ENCODE measurements at regions of chr6 and their contacts with region 1.

Region 1: GRCh38 chr6:87078983-87079616 is 15.8 kb downstream of the CGA start:
- DNase-seq: no peak
- ATAC-seq: peak; percentile 96
- H3K4me3 ChIP-seq: no peak overlapping the region
- H3K27ac ChIP-seq: no peak overlapping the region
- H3K4me1 ChIP-seq: peaks cover 7% of the 10 kb centered on the region
- H3K27me3 ChIP-seq: no peaks in the 10 kb centered on the region
- CTCF ChIP-seq: peak; percentile 74 to 99 (median 95)
- EP300 ChIP-seq: no peak
- POLR2A ChIP-seq: no peak
- RAD21 ChIP-seq: peak; percentile 62

Region 2: GRCh38 chr6:85516168-85516567 is 1562.9 kb before region 1 on chr6:
- CTCF ChIA-PET with region 1: no interaction called
- POLR2A ChIA-PET with region 1: no interaction called
- RAD21 ChIA-PET with region 1: no interaction called
- SMC1A ChIA-PET with region 1: no interaction called
- in situ Hi-C with region 1: no loop called
- intact Hi-C with region 1: no loop called
- DNase-seq: no peak
- ATAC-seq: no peak
- H3K4me3 ChIP-seq: no peak overlapping the region
- H3K27ac ChIP-seq: no peak overlapping the region
- H3K4me1 ChIP-seq: no peaks in the 10 kb centered on the region
- H3K27me3 ChIP-seq: no peaks in the 10 kb centered on the region
- CTCF ChIP-seq: no peak
- EP300 ChIP-seq: no peak
- POLR2A ChIP-seq: no peak
- RAD21 ChIP-seq: no peak

Region 3: GRCh38 chr6:86285876-86286275 is 793.2 kb before region 1 on chr6:
- CTCF ChIA-PET with region 1: no interaction called
- POLR2A ChIA-PET with region 1: no interaction called
- RAD21 ChIA-PET with region 1: no interaction called
- SMC1A ChIA-PET with region 1: no interaction called
- in situ Hi-C with region 1: no loop called
- intact Hi-C with region 1: no loop called
- DNase-seq: no peak
- ATAC-seq: no peak
- H3K4me3 ChIP-seq: no peak overlapping the region
- H3K27ac ChIP-seq: no peak overlapping the region
- H3K4me1 ChIP-seq: no peaks in the 10 kb centered on the region
- H3K27me3 ChIP-seq: no peaks in the 10 kb centered on the region
- CTCF ChIP-seq: no peak
- EP300 ChIP-seq: no peak
- POLR2A ChIP-seq: no peak
- RAD21 ChIP-seq: no peak

Region 4: GRCh38 chr6:86526238-86526637 is 552.9 kb before region 1 on chr6:
- CTCF ChIA-PET with region 1: no interaction called
- POLR2A ChIA-PET with region 1: no interaction called
- RAD21 ChIA-PET with region 1: no interaction called
- SMC1A ChIA-PET with region 1: no interaction called
- in situ Hi-C with region 1: no loop called
- intact Hi-C with region 1: no loop called
- DNase-seq: no peak
- ATAC-seq: no peak
- H3K4me3 ChIP-seq: no peak overlapping the region
- H3K27ac ChIP-seq: no peak overlapping the region
- H3K4me1 ChIP-seq: no peaks in the 10 kb centered on the region
- H3K27me3 ChIP-seq: no peaks in the 10 kb centered on the region
- CTCF ChIP-seq: no peak
- EP300 ChIP-seq: no peak
- POLR2A ChIP-seq: no peak
- RAD21 ChIP-seq: no peak

Region 5: DNA sequence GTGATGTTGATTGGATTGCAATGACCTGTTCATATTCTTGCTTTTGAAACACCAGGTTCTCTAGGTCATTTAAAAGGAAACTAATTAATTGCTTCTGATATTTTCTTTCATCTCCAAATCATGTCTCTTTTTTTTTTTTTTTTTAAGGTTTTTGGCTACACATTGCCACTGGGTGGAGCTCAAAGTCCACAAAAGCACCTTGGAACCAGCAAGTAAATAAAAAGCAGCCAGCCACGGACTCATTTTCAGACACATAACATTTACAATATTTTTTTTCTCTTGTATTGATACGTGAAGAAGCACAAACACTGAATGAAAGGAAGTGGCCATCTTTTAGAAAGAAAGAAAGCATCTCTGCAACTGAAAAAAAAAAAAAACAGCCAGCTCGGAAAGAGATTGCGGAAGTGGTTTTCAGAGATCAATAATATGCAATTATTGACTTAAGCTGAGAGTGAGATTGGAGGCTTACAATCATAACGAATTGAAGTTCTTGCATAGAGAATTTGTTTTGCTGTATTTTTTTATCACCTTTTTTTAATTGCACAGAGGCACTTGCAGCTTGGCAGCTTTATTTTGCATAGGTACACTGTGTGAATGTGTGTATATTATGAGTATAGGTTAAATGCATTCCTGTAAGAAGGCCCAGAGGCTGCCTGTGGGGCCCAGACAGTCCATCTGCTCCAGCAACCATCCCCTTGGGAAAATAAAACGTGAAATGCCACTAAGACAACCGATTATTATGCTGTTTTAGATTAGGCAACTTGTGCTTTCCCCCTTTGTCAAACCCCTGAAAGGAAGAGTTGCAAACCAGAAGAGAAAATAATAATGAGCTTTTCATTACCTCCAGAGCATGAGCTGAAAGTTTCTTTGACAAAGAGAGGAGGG is 12.4 kb before region 1 on chr6:
- CTCF ChIA-PET with region 1: interaction called, 76 read pairs
- POLR2A ChIA-PET with region 1: interaction called, 4 read pairs
- RAD21 ChIA-PET with region 1: interaction called, 10 read pairs
- SMC1A ChIA-PET with region 1: interaction called, 38 read pairs
- in situ Hi-C with region 1: no loop called
- intact Hi-C with region 1: no loop called
- DNase-seq: peak; percentile 28
- ATAC-seq: peak; percentile 53; the same call in 2 of the 3 replicates
- H3K4me3 ChIP-seq: no peak overlapping the region
- H3K27ac ChIP-seq: no peak overlapping the region
- H3K4me1 ChIP-seq: peaks cover 4% of the 10 kb centered on the region
- H3K27me3 ChIP-seq: no peaks in the 10 kb centered on the region
- CTCF ChIP-seq: peak; percentile 44 to 77 (median 62); a peak in 5 of 6 replicates
- EP300 ChIP-seq: no peak
- POLR2A ChIP-seq: no peak
- RAD21 ChIP-seq: peak; percentile 89

Region 6: DNA sequence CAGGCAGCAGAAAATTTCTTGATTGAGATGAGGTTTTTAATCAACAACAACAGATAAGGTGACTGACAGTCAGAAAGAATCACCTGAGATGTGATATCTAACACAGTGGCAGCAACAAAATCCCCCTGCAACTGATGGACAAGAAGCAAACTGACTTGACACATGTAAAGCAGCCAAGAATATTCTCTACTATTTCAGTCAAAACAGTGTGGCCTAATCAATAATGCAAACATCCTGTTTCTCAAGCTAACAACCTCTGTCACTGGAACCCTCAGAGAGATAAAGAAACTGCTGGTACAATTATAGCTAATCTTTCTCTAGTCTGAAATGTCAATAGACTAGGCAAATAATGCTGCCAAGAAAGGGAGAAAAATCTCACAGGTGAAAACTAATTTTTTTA is 20.4 kb after region 1 on chr6:
- CTCF ChIA-PET with region 1: interaction called, 31 read pairs
- POLR2A ChIA-PET with region 1: no interaction called
- RAD21 ChIA-PET with region 1: interaction called, 3 read pairs
- SMC1A ChIA-PET with region 1: no interaction called
- in situ Hi-C with region 1: no loop called
- intact Hi-C with region 1: no loop called
- DNase-seq: peak; percentile 33
- ATAC-seq: peak; percentile 72
- H3K4me3 ChIP-seq: no peak overlapping the region
- H3K27ac ChIP-seq: no peak overlapping the region
- H3K4me1 ChIP-seq: no peaks in the 10 kb centered on the region
- H3K27me3 ChIP-seq: no peaks in the 10 kb centered on the region
- CTCF ChIP-seq: no peak
- EP300 ChIP-seq: no peak
- POLR2A ChIP-seq: no peak
- RAD21 ChIP-seq: no peak

Region 7: DNA sequence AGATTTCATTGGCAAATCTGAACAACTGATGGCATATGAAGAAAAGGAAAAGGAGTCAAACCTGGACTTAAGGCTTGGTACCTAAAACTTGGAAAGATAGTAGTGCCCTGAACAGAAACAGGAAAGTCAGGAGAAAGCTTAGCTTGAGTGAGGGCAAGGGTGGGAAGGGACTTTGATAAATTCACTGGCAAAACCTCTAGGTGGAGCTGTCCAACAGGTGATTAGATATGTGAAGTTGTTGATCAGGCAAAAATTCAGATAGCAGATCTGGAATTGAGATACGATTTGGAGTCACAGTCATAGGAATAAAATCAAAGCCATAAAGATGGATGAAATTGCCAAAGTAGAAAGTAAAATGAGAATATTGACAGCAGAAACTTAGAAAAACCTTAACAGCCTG is 60.1 kb after region 1 on chr6:
- CTCF ChIA-PET with region 1: interaction called, 17 read pairs
- POLR2A ChIA-PET with region 1: no interaction called
- RAD21 ChIA-PET with region 1: interaction called, 3 read pairs
- SMC1A ChIA-PET with region 1: interaction called, 3 read pairs
- in situ Hi-C with region 1: no loop called
- intact Hi-C with region 1: no loop called
- DNase-seq: no peak
- ATAC-seq: peak; percentile 91
- H3K4me3 ChIP-seq: no peak overlapping the region
- H3K27ac ChIP-seq: no peak overlapping the region
- H3K4me1 ChIP-seq: no peaks in the 10 kb centered on the region
- H3K27me3 ChIP-seq: no peaks in the 10 kb centered on the region
- CTCF ChIP-seq: peak; percentile 69 to 84 (median 77)
- EP300 ChIP-seq: no peak
- POLR2A ChIP-seq: no peak
- RAD21 ChIP-seq: peak; percentile 95

Region 8: DNA sequence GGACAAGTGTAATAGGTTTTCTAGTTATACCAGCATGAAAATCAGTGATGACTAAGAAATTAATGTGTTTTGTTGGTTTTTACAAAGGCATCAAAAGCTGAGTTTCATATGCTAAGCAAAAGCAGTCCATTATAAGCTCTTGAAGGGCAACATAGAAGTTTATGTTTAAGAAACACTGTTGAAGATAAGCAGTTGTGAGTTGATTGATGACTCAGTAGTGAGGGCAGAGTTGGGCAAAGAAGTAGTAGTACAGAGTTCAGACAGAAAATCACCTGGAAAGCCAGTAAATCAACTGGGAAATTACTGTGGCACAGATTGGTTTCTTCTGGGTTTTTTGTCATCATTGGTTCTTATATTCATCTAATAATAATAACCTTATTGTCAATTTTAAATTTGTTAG is 165.3 kb after region 1 on chr6:
- CTCF ChIA-PET with region 1: interaction called, 11 read pairs
- POLR2A ChIA-PET with region 1: no interaction called
- RAD21 ChIA-PET with region 1: no interaction called
- SMC1A ChIA-PET with region 1: interaction called, 3 read pairs
- in situ Hi-C with region 1: no loop called
- intact Hi-C with region 1: no loop called
- DNase-seq: no peak
- ATAC-seq: no peak
- H3K4me3 ChIP-seq: no peak overlapping the region
- H3K27ac ChIP-seq: no peak overlapping the region
- H3K4me1 ChIP-seq: no peaks in the 10 kb centered on the region
- H3K27me3 ChIP-seq: no peaks in the 10 kb centered on the region
- CTCF ChIP-seq: no peak
- EP300 ChIP-seq: no peak
- POLR2A ChIP-seq: no peak
- RAD21 ChIP-seq: no peak